ENCODE measurements at regions of chr1 and their contacts with region 1.

Region 1: DNA sequence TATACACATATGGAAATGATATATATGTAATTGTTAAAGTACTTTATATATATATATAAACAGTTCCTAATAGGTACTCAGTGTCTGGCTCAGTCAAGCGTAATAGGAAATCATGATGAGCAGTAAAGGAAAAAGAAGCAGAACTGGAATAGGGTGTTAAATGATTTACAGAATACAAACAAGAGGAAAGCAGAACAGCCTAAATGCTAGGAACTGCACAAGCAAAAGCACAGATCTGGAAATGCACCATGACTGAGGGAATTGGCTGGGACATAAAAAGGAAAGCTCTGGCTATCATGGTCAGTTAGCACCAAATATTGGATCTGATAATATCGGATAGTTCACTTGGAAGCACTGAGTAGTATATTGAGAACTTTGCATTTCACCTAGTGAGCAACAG is 51.8 kb downstream of the SLC44A5 start:
- DNase-seq: no peak
- ATAC-seq: no peak
- H3K4me3 ChIP-seq: no peak overlapping the region
- H3K27ac ChIP-seq: no peak overlapping the region
- H3K4me1 ChIP-seq: no peaks in the 10 kb centered on the region
- H3K27me3 ChIP-seq: no peaks in the 10 kb centered on the region
- CTCF ChIP-seq: no peak
- POLR2A ChIP-seq: no peak

Region 2: DNA sequence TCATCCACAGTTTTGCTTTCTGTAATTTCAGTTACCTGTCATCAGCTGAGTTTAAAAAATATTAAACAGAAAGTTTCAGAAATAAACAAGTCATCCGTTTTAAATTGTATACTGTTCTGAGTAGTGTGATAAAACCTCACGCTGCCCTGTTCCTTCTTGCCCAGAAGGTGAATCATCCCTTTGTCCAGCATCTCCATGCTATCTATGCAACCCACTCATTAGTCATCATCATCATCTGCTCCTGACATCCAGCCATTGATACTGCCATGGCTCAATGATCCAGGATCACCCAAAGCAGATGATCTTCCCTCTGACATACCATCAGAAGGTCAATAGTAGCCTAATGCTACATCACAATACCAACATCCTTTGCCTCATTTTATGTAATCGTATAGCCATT is 146.5 kb before region 1 on chr1:
- in situ Hi-C with region 1: no loop called
- intact Hi-C with region 1: no loop called
- DNase-seq: no peak
- ATAC-seq: no peak
- H3K4me3 ChIP-seq: no peak overlapping the region
- H3K27ac ChIP-seq: no peak overlapping the region
- H3K4me1 ChIP-seq: no peaks in the 10 kb centered on the region
- H3K27me3 ChIP-seq: no peaks in the 10 kb centered on the region
- CTCF ChIP-seq: no peak
- POLR2A ChIP-seq: no peak

Region 3: DNA sequence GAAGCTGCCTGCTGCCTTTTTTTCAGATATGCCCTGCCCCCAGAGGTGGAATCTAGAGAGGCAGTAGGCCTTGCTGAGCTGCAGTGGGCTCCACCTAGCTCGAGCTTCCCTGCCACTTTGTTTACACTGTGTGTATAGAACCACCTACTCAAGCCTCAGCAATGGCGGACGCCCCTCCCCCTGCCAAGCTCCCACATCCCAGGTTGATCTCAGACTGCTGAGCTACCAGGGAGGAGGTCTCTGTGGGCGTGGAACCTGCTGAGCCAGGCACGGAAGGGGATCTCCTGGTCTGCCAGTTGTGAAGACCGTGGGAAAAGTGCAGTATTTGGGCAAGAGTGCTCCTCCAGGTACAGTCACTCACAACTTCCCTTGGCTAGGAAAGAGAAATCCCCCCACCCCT is 302.7 kb after region 1 on chr1:
- in situ Hi-C with region 1: no loop called
- intact Hi-C with region 1: loop called (anchors 5 kb)
- DNase-seq: no peak
- ATAC-seq: no peak
- H3K4me3 ChIP-seq: no peak overlapping the region
- H3K27ac ChIP-seq: no peak overlapping the region
- H3K4me1 ChIP-seq: no peaks in the 10 kb centered on the region
- H3K27me3 ChIP-seq: no peaks in the 10 kb centered on the region
- CTCF ChIP-seq: no peak
- POLR2A ChIP-seq: no peak

Region 4: DNA sequence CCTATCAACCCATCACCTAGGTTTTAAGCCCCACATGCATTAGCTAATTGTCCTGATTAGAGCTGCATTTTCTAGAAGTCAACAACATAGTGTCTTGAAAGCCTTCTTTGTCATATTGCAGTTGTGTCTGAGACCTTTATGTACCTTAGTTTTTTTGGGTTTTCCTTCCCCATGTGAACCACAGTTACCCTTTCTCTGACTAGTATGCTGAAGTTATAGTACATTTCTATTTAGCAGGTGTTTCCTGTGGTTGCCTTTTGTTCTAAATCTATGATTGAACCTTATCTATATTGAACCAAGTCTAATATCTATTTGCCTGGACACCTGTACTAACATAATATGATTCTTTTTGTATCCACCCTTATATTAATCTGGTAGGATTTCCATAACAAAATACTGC is 651.0 kb after region 1 on chr1:
- in situ Hi-C with region 1: no loop called
- intact Hi-C with region 1: no loop called
- DNase-seq: no peak
- ATAC-seq: no peak
- H3K4me3 ChIP-seq: no peak overlapping the region
- H3K27ac ChIP-seq: no peak overlapping the region
- H3K4me1 ChIP-seq: no peaks in the 10 kb centered on the region
- H3K27me3 ChIP-seq: no peaks in the 10 kb centered on the region
- CTCF ChIP-seq: no peak
- POLR2A ChIP-seq: no peak

Measured in gastrocnemius medialis (tissue), 4 donors.